ENCODE measurements at regions of chr1 and their contacts with region 1.

Region 1: DNA sequence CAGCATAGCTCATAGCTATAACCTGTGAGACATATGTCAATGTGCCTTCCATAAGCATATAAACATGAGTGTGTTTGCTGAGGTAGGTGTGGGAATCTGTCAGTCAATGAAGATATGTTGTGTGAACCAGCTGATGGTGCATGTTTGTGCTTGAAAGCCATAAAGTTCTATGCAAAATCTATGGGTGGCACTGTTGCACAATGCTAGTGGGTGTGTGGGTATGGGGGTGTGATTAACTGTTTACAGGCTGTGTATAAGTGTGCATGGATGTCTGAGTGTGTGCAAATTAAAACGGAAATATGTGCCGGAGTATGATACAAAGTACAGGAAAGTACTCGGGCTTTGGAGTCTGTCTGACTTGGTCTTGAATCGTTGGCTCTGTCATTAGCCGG is 1.0 kb upstream of the ATP2B4 start:
- DNase-seq: peak; percentile 82
- ATAC-seq: peak; percentile 40
- H3K4me3 Mint-ChIP-seq: peak overlapping the region; percentile 97
- H3K27ac Mint-ChIP-seq: peak overlapping the region; percentile 87
- H3K4me1 Mint-ChIP-seq: peaks cover 63% of the 10 kb centered on the region
- H3K27me3 Mint-ChIP-seq: no peaks in the 10 kb centered on the region

Region 2: GRCh38 chr1:203593723-203594122 is 31.9 kb before region 1 on chr1:
- CTCF ChIA-PET with region 1: interaction called, 26 read pairs
- DNase-seq: peak; percentile 78
- ATAC-seq: peak; percentile 92
- H3K4me3 Mint-ChIP-seq: no peak overlapping the region
- H3K27ac Mint-ChIP-seq: peak overlapping the region; percentile 13
- H3K4me1 Mint-ChIP-seq: peaks cover 23% of the 10 kb centered on the region
- H3K27me3 Mint-ChIP-seq: peaks cover 3% of the 10 kb centered on the region

Region 3: DNA sequence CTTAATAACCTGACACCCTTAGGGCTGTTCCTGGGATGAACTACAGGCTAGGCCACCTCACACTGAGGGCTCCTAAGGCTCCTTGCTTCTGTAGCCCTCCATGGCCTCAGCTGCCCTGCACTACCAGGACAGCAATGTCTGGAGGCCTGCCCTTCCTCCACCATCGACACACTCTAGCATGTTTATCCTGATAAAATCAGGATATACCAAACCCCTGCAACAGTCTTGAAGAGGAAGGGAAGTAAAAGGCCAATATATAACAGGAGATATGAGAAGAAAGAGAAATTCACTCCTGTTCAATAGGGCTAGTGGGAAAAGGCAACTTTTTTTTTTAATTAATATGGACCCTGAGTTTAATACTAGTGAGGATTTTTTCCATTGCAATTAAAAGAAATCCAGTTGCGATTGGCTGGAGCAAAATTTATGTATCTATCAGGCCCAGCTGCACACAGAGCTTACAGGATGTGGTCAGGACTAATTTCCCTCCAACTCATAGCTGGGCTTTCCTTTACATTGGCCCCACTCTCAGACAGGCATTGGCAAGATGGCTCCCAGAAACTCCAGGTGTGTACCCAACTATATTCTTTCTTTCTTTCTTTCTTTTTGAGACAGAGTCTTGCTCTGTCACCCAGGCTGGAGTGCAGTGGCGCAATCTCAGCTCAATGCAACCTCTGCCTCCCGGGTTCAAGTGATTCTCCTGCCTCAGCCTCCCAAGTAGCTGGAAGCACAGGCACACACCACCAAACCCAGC is 12.5 kb before region 1 on chr1:
- CTCF ChIA-PET with region 1: interaction called, 30 read pairs
- DNase-seq: peak; percentile 65
- ATAC-seq: peak; percentile 88
- H3K4me3 Mint-ChIP-seq: peak overlapping the region; percentile 54
- H3K27ac Mint-ChIP-seq: peak overlapping the region; percentile 87
- H3K4me1 Mint-ChIP-seq: peaks cover 57% of the 10 kb centered on the region
- H3K27me3 Mint-ChIP-seq: no peaks in the 10 kb centered on the region

Region 4: GRCh38 chr1:203673550-203674427 is 48.2 kb after region 1 on chr1:
- CTCF ChIA-PET with region 1: interaction called, 61 read pairs
- DNase-seq: peak; percentile 94
- ATAC-seq: peak; percentile 91
- H3K4me3 Mint-ChIP-seq: peak overlapping the region; percentile 69
- H3K27ac Mint-ChIP-seq: peak overlapping the region; percentile 98
- H3K4me1 Mint-ChIP-seq: peaks cover 77% of the 10 kb centered on the region
- H3K27me3 Mint-ChIP-seq: no peaks in the 10 kb centered on the region

Region 5: GRCh38 chr1:203702130-203702577 is 76.5 kb after region 1 on chr1:
- CTCF ChIA-PET with region 1: interaction called, 89 read pairs
- DNase-seq: peak; percentile 70
- ATAC-seq: peak; percentile 78
- H3K4me3 Mint-ChIP-seq: no peak overlapping the region
- H3K27ac Mint-ChIP-seq: peak overlapping the region; percentile 48
- H3K4me1 Mint-ChIP-seq: peaks cover 26% of the 10 kb centered on the region
- H3K27me3 Mint-ChIP-seq: no peaks in the 10 kb centered on the region